Activated CD4-positive, alpha-beta T cell treated with anti-CD3 and anti-CD28 coated beads for 36 hours (primary cell): ENCODE measurements at regions of chr7 and their contacts with region 1.

Region 1: GRCh38 chr7:92567460-92567859 is 22.7 kb downstream of the FAM133B start:
- DNase-seq: no peak
- ATAC-seq: no peak
- H3K4me3 Mint-ChIP-seq: no peak overlapping the region
- H3K27ac Mint-ChIP-seq: no peak overlapping the region
- H3K4me1 Mint-ChIP-seq: no peaks in the 10 kb centered on the region
- H3K27me3 Mint-ChIP-seq: no peaks in the 10 kb centered on the region

Region 2: DNA sequence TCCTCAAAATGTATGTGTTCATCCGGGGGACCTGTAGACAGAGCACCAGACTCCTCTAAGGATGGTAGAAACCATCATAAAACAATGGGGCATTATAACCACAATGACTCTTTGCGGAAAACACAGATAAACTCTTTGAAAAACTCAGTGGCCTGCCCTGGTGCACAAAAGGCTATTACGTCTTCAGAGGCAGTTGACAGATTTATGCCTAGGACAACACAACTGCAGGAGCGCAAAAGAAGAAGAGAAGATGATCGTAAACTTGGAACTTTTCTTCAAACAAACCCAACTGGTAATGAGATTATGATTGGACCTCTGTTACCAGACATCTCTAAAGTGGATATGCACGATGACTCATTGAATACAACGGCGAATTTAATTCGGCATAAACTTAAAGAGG is 32.9 kb before region 1 on chr7:
- CTCF ChIA-PET with region 1: no interaction called
- POLR2A ChIA-PET with region 1: no interaction called
- intact Hi-C with region 1: loop called in 1 of 2 experiments (anchors 5 kb)
- DNase-seq: no peak
- ATAC-seq: no peak
- H3K4me3 Mint-ChIP-seq: no peak overlapping the region
- H3K27ac Mint-ChIP-seq: peak overlapping the region; percentile 55
- H3K4me1 Mint-ChIP-seq: peaks cover 25% of the 10 kb centered on the region
- H3K27me3 Mint-ChIP-seq: no peaks in the 10 kb centered on the region

Region 3: DNA sequence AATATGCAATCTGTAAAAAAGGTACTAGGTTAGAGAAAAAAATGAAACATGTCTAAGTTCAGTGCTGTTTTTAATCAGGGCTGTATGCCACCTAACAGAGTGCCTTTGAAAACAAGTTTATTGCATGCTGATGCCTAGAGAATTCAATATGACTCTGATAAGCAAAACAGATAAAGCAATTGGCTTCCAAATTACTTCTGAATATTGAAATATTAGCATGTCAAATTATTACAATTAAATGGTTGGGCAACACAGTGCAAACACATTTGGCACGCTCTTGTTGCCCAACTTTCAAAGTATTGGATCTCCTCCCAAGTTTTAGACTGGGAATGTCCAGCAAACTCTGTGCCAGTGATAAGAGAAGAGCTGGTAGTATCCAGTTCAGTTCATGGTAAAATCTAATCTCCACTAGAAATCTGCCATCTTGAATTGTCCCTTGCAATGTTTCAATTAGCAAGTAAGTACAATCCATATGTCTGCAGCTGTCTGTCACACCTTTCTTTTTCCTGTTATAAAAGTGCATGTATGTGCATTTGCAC is 88.0 kb after region 1 on chr7:
- CTCF ChIA-PET with region 1: no interaction called
- POLR2A ChIA-PET with region 1: no interaction called
- intact Hi-C with region 1: no loop called
- DNase-seq: no peak
- ATAC-seq: no peak
- H3K4me3 Mint-ChIP-seq: no peak overlapping the region
- H3K27ac Mint-ChIP-seq: no peak overlapping the region
- H3K4me1 Mint-ChIP-seq: peaks cover 36% of the 10 kb centered on the region
- H3K27me3 Mint-ChIP-seq: no peaks in the 10 kb centered on the region

Region 4: DNA sequence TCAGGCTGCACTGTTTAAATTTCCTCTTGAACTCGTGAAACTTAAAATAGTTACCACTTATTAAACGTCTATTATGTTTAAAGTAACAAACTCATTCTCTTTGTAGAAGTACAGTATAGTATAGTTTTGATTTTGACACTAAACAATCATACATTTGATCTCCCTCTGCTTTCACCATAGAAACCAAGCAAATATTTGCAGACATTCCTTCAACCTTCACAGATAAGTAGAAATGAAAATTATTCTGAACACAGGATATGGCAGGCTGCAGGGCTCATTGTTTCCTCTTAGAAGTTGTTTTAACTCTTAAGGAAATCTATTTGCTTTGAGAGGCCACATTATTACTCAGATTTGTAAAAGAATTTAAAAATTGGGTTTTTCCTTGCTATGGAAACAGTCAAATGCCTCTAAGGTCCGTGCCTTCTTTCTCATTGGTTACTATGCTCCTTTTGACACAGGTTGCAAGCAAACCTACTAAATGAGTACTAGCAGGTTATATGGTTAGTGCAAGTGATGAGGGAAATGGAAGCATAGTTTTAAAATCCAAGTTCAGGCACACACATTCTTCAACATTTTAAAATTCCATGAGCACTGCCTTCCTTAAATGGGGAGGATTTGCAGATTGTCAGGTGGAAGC is 115.6 kb after region 1 on chr7:
- CTCF ChIA-PET with region 1: no interaction called
- POLR2A ChIA-PET with region 1: no interaction called
- intact Hi-C with region 1: no loop called
- DNase-seq: no peak
- ATAC-seq: peak; percentile 53
- H3K4me3 Mint-ChIP-seq: peak overlapping the region; percentile 39
- H3K27ac Mint-ChIP-seq: peak overlapping the region; percentile 88
- H3K4me1 Mint-ChIP-seq: peaks cover 83% of the 10 kb centered on the region
- H3K27me3 Mint-ChIP-seq: no peaks in the 10 kb centered on the region